Heart right ventricle (tissue), 16 donors: ENCODE measurements at regions of chr7 and their contacts with region 1.

Region 1: GRCh38 chr7:114026486-114027089 is 107.8 kb upstream of the PPP1R3A start:
- DNase-seq: peak in 1 of 2 donors; percentile 18
- ATAC-seq: no peak
- H3K4me3 ChIP-seq: no peak overlapping the region
- H3K27ac ChIP-seq: no peak overlapping the region
- H3K4me1 ChIP-seq: no peaks in the 10 kb centered on the region
- H3K27me3 ChIP-seq: no peaks in the 10 kb centered on the region
- CTCF ChIP-seq: peak; percentile 39 to 81 (median 70)

Region 2: GRCh38 chr7:113774182-113774807 is 252.3 kb before region 1 on chr7:
- intact Hi-C with region 1: loop called in 1 of 10 experiments (anchors 10 kb)
- DNase-seq: peak in 1 of 2 donors; percentile 31
- ATAC-seq: peak in 7 of 8 donors; percentile 53 to 86 (median 76)
- H3K4me3 ChIP-seq: no peak overlapping the region
- H3K27ac ChIP-seq: peak overlapping the region in 1 of 10 donors; percentile 37
- H3K4me1 ChIP-seq: peaks cover 0 to 8% (median 4%) of the 10 kb centered on the region in 9 donors
- H3K27me3 ChIP-seq: no peaks in the 10 kb centered on the region
- CTCF ChIP-seq: peak; percentile 25 to 66 (median 53)

Region 3: DNA sequence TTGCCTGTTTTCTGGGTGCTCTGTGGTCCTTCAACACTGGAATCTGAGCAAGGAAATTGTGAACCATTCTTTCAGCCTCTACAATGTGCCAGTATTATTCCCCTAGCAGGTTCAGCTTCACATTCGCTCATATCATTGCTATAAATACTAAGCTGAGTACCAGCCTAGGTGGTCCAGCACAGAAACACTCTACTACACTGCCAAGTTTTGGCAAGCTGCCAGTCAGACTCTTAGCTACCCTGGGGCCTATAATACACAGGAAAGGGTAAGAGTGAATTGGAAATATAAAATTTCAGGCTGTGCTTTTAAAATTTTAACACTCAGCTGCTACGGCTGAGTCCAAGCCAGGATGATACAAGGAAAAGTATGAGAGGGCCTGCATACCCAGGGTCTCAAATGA is 57.9 kb before region 1 on chr7:
- intact Hi-C with region 1: no loop called
- DNase-seq: no peak
- ATAC-seq: no peak
- H3K4me3 ChIP-seq: no peak overlapping the region
- H3K27ac ChIP-seq: no peak overlapping the region
- H3K4me1 ChIP-seq: no peaks in the 10 kb centered on the region
- H3K27me3 ChIP-seq: no peaks in the 10 kb centered on the region
- CTCF ChIP-seq: no peak

Region 4: DNA sequence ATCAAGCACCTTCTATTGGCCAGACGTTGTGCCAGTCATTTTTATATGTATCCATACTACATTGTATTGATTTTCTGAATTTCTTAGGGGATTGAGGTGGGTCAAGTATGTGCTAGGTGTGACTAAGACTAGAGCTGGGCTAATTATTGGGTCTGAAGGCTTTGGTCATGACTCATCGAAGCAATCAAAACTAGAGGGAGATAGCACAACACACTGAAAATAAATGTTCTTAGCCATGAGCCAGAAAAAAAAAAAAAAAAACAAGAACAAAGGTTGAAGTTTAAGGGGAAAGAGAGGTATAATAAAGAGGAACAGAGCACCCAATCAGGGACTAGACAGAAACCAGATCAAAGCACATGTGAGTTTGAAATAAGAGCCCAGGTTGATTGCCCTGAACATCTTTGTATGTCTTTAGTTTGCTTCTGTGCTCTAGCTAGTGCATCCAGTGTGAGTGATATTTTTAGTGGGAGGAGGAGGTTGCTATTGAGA is 216.5 kb after region 1 on chr7:
- intact Hi-C with region 1: no loop called
- DNase-seq: no peak
- ATAC-seq: no peak
- H3K4me3 ChIP-seq: no peak overlapping the region
- H3K27ac ChIP-seq: no peak overlapping the region
- H3K4me1 ChIP-seq: peaks cover 0 to 9% (median 0%) of the 10 kb centered on the region in 9 donors
- H3K27me3 ChIP-seq: no peaks in the 10 kb centered on the region
- CTCF ChIP-seq: no peak

Region 5: DNA sequence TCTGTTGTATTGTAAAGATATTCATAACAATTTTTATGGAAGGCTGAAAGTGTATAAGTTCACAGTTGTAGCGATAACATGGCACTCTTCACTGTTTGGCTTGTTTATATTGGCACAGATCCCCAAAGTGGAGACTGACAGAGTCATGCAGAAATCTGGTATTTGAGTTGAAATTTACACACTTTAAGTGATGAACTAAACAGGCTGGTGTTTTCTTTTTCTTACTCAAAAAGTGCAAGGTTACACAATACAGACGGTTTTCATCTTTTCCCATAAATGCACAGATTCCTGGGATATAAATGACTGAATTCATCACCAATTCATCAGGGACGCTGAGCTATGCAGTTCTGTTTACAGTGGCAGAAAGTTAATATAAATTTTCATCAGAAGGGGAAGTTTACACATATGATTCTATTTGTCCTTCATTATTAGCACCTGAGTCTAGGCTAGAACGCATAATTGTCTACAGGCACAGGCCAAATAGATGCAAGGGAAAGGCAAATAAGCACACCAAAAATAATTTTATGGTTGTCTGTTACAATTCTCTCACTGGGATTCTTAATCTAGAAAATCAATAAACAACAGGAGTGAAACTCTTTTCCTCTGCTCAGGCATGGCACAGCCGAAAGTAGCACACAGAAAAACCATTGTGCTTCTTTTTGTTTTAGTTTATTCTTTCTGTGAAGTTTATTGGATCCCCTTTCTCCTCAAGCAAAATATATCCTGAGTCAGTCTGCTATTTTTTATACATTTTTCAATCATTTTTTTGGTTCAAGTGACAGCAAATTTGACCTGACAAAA is 476.1 kb after region 1 on chr7:
- intact Hi-C with region 1: no loop called
- DNase-seq: no peak
- ATAC-seq: no peak
- H3K4me3 ChIP-seq: no peak overlapping the region
- H3K27ac ChIP-seq: no peak overlapping the region
- H3K4me1 ChIP-seq: no peaks in the 10 kb centered on the region
- H3K27me3 ChIP-seq: no peaks in the 10 kb centered on the region
- CTCF ChIP-seq: no peak

Region 6: GRCh38 chr7:115910541-115911164 is 1884.1 kb after region 1 on chr7:
- intact Hi-C with region 1: loop called in 2 of 10 experiments (anchors 5 to 10 kb)
- DNase-seq: no peak
- ATAC-seq: no peak
- H3K4me3 ChIP-seq: no peak overlapping the region
- H3K27ac ChIP-seq: no peak overlapping the region
- H3K4me1 ChIP-seq: peaks cover 0 to 9% (median 0%) of the 10 kb centered on the region in 9 donors
- H3K27me3 ChIP-seq: peaks cover 0 to 13% (median 0%) of the 10 kb centered on the region in 7 donors
- CTCF ChIP-seq: peak in 8 of 9 donors; percentile 15 to 68 (median 62)